Activated B cell treated with CpG ODN at 0.5 μM for 24 hours (primary cell): ENCODE measurements at regions of chr1 and their contacts with region 1.

Region 1: DNA sequence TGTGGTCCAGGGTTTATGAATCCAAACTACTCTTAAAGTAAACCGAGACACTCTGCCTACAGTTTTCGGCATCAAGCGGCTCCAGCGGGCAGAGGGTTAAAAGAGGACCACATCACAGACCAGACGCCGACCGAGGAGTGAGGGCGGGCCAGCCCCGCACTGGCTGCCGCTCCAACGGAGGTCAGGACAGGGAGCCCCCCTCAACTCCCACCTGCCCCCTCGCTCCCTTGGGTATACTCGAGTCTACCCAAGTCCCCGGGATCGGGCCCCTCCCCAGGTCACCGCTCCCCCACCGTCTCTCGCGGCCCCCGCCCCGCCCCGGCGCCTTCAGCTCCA is 312 bp downstream of the ARNT start:
- DNase-seq: no peak
- ATAC-seq: peak; percentile 32
- H3K4me3 Mint-ChIP-seq: peak overlapping the region; percentile 92
- H3K27ac Mint-ChIP-seq: peak overlapping the region; percentile 88
- H3K4me1 Mint-ChIP-seq: peaks cover 31% of the 10 kb centered on the region
- H3K27me3 Mint-ChIP-seq: no peaks in the 10 kb centered on the region
- CTCF ChIP-seq: no peak

Region 2: GRCh38 chr1:150696590-150697524 is 179.2 kb before region 1 on chr1 and contains the start of gene GOLPH3L:
- CTCF ChIA-PET with region 1: no interaction called
- POLR2A ChIA-PET with region 1: no interaction called
- intact Hi-C with region 1: loop called (anchors 5 kb)
- DNase-seq: peak; percentile 63
- ATAC-seq: peak; percentile 99
- H3K4me3 Mint-ChIP-seq: peak within 1 kb of the TSS; percentile 99
- H3K27ac Mint-ChIP-seq: peak within 1 kb of the TSS; percentile 96
- H3K4me1 Mint-ChIP-seq: peaks cover 23% of the 10 kb centered on the region
- H3K27me3 Mint-ChIP-seq: no peaks in the 10 kb centered on the region
- CTCF ChIP-seq: no peak
- total RNA-seq, gene GOLPH3L: 19.7 and 22.5 TPM in 2 replicates

Region 3: GRCh38 chr1:150841626-150842025 is 34.5 kb before region 1 on chr1:
- CTCF ChIA-PET with region 1: no interaction called
- POLR2A ChIA-PET with region 1: no interaction called
- intact Hi-C with region 1: no loop called
- DNase-seq: no peak
- ATAC-seq: no peak
- H3K4me3 Mint-ChIP-seq: no peak overlapping the region
- H3K27ac Mint-ChIP-seq: no peak overlapping the region
- H3K4me1 Mint-ChIP-seq: no peaks in the 10 kb centered on the region
- H3K27me3 Mint-ChIP-seq: no peaks in the 10 kb centered on the region
- CTCF ChIP-seq: no peak

Region 4: DNA sequence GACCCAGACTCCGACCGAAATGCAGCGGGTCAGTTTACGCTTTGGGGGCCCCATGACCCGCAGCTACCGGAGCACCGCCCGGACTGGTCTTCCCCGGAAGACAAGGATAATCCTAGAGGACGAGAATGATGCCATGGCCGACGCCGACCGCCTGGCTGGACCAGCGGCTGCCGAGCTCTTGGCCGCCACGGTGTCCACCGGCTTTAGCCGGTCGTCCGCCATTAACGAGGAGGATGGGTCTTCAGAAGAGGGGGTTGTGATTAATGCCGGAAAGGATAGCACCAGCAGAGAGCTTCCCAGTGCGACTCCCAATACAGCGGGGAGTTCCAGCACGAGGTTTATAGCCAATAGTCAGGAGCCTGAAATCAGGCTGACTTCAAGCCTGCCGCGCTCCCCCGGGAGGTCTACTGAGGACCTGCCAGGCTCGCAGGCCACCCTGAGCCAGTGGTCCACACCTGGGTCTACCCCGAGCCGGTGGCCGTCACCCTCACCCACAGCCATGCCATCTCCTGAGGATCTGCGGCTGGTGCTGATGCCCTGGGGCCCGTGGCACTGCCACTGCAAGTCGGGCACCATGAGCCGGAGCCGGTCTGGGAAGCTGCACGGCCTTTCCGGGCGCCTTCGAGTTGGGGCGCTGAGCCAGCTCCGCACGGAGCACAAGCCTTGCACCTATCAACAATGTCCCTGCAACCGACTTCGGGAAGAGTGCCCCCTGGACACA is 172.0 kb after region 1 on chr1:
- CTCF ChIA-PET with region 1: no interaction called
- POLR2A ChIA-PET with region 1: no interaction called
- intact Hi-C with region 1: loop called (anchors 5 kb)
- DNase-seq: peak; percentile 58
- ATAC-seq: peak; percentile 74
- H3K4me3 Mint-ChIP-seq: peak overlapping the region; percentile 94
- H3K27ac Mint-ChIP-seq: peak overlapping the region; percentile 89
- H3K4me1 Mint-ChIP-seq: peaks cover 42% of the 10 kb centered on the region
- H3K27me3 Mint-ChIP-seq: no peaks in the 10 kb centered on the region
- CTCF ChIP-seq: no peak